HEK293 (cell line): ENCODE measurements at regions of chr10 and their contacts with region 1.

Region 1: GRCh38 chr10:11830836-11831519 is 7.8 kb downstream of the PROSER2 start:
- H3K4me3 ChIP-seq: no peak overlapping the region
- H3K27ac ChIP-seq: 0 out of 2 replicates have a peak overlapping the region, but pooled peaks have one; percentile 2
- H3K4me1 ChIP-seq: peaks cover 25% of the 10 kb centered on the region
- CTCF ChIP-seq: no peak

Region 2: GRCh38 chr10:11819030-11819429 is 11.9 kb before region 1 on chr10:
- CTCF ChIA-PET with region 1: interaction called, 12 read pairs
- POLR2A ChIA-PET with region 1: interaction called, 4 read pairs
- H3K4me3 ChIP-seq: no peak overlapping the region
- H3K27ac ChIP-seq: no peak overlapping the region
- H3K4me1 ChIP-seq: 0 out of 2 replicates have a peak, but pooled peaks cover under 1% of the 10 kb centered on the region
- CTCF ChIP-seq: no peak

Region 3: GRCh38 chr10:11949152-11949551 is 118.2 kb after region 1 on chr10:
- CTCF ChIA-PET with region 1: no interaction called
- POLR2A ChIA-PET with region 1: no interaction called
- H3K4me3 ChIP-seq: no peak overlapping the region
- H3K27ac ChIP-seq: no peak overlapping the region
- H3K4me1 ChIP-seq: no peaks in the 10 kb centered on the region
- CTCF ChIP-seq: no peak